ENCODE measurements at regions of chr10 and their contacts with region 1.

Region 1: GRCh38 chr10:70758757-70759514 is 26.2 kb downstream of the TBATA start:
- DNase-seq: peak; percentile 61
- H3K4me3 ChIP-seq: no peak overlapping the region
- H3K27ac ChIP-seq: no peak overlapping the region
- H3K27me3 ChIP-seq: peaks cover 18% of the 10 kb centered on the region
- CTCF ChIP-seq: peak; percentile 87

Region 2: GRCh38 chr10:70461215-70461986 is 297.5 kb before region 1 on chr10:
- CTCF ChIA-PET with region 1: interaction called, 13 read pairs
- POLR2A ChIA-PET with region 1: interaction called, 4 read pairs
- DNase-seq: peak; percentile 8
- H3K4me3 ChIP-seq: no peak overlapping the region
- H3K27ac ChIP-seq: no peak overlapping the region
- H3K27me3 ChIP-seq: peaks cover 16% of the 10 kb centered on the region
- CTCF ChIP-seq: peak; percentile 91

Region 3: GRCh38 chr10:70558871-70559810 is 199.8 kb before region 1 on chr10:
- CTCF ChIA-PET with region 1: interaction called, 59 read pairs
- POLR2A ChIA-PET with region 1: no interaction called
- DNase-seq: peak; percentile 18
- H3K4me3 ChIP-seq: 0 out of 2 replicates have a peak overlapping the region, but pooled peaks have one; percentile 17
- H3K27ac ChIP-seq: peak overlapping the region; percentile 21
- H3K27me3 ChIP-seq: peaks cover 2% of the 10 kb centered on the region
- CTCF ChIP-seq: peak; percentile 61

Region 4: GRCh38 chr10:70738006-70738760 is 20.8 kb before region 1 on chr10:
- CTCF ChIA-PET with region 1: interaction called, 12 read pairs
- POLR2A ChIA-PET with region 1: no interaction called
- DNase-seq: no peak
- H3K4me3 ChIP-seq: no peak overlapping the region
- H3K27ac ChIP-seq: no peak overlapping the region
- H3K27me3 ChIP-seq: peaks cover 5% of the 10 kb centered on the region
- CTCF ChIP-seq: peak; percentile 13; the same call in 1 of the 2 replicates